ENCODE measurements at regions of chr17 and their contacts with region 1.

Region 1: DNA sequence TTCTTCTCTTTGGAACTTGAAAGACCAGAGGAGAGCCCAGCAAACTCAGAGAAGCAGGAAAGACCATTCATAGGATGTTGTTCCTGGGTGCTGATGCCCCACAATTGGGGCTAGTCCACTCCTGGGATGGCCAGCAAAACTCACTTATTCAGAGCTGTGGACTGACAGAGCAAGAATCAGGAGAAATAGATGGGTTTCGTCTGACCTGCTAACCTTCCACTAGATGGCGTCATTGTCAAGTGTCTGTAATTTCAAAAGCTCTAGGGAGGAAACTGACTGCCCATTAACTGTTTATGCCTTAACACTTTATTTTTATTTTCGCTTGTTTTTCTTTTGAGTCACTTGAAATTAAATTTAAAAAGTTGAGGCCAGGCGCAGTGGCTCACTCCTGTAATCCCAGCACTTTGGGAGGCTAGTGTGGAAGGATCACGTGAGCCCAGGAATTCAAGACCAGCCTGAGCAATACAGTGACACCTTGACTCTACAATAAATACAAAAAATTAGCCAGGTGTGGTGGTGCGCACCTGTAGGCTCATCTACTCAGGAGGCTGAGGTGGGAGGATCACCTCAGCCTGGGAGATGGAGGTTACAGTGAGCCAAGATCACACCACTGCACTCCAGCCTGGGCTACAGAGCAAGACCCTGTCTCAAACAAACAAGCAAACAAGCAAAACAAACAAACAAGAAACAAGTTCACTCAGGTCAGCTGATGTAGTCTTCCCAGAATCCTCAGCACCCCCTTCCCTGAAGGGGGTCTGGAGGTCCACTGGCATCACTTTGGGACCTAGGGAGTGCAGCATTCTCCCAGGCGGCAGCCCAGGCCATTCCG is 28.6 kb upstream of the MILR1 start:
- DNase-seq: peak; percentile 84
- ATAC-seq: peak; percentile 82
- H3K4me3 ChIP-seq: no peak overlapping the region
- H3K4me3 Mint-ChIP-seq: no peak overlapping the region
- H3K27ac ChIP-seq: no peak overlapping the region
- H3K27ac Mint-ChIP-seq: no peak overlapping the region
- H3K4me1 ChIP-seq: peaks cover 3 to 8% of the 10 kb centered on the region in 2 donors
- H3K4me1 Mint-ChIP-seq: peaks cover 5% of the 10 kb centered on the region
- H3K27me3 ChIP-seq: no peaks in the 10 kb centered on the region
- H3K27me3 Mint-ChIP-seq: no peaks in the 10 kb centered on the region
- CTCF ChIP-seq: peak; percentile 81

Region 2: GRCh38 chr17:64025732-64026294 is 394.5 kb before region 1 on chr17:
- CTCF ChIA-PET with region 1: interaction called, 13 read pairs
- POLR2A ChIA-PET with region 1: no interaction called
- intact Hi-C with region 1: loop called (anchors 5 kb)
- DNase-seq: peak; percentile 94
- ATAC-seq: peak; percentile 90
- H3K4me3 ChIP-seq: peak overlapping the region in 4 of 5 experiments; percentile 4 to 47 (median 22)
- H3K4me3 Mint-ChIP-seq: peak overlapping the region; percentile 80
- H3K27ac ChIP-seq: peak overlapping the region; percentile 52 to 67
- H3K27ac Mint-ChIP-seq: peak overlapping the region; percentile 57
- H3K4me1 ChIP-seq: peaks cover 26 to 30% of the 10 kb centered on the region in 2 donors
- H3K4me1 Mint-ChIP-seq: peaks cover 37% of the 10 kb centered on the region
- H3K27me3 ChIP-seq: no peaks in the 10 kb centered on the region
- H3K27me3 Mint-ChIP-seq: no peaks in the 10 kb centered on the region
- CTCF ChIP-seq: peak; percentile 94

Region 3: GRCh38 chr17:64320613-64321553 is 99.5 kb before region 1 on chr17:
- CTCF ChIA-PET with region 1: interaction called, 316 read pairs
- POLR2A ChIA-PET with region 1: no interaction called
- intact Hi-C with region 1: loop called (anchors 1 kb)
- DNase-seq: peak; percentile 74
- ATAC-seq: peak; percentile 13
- H3K4me3 ChIP-seq: no peak overlapping the region
- H3K4me3 Mint-ChIP-seq: peak overlapping the region; percentile 56
- H3K27ac ChIP-seq: no peak overlapping the region
- H3K27ac Mint-ChIP-seq: peak overlapping the region; percentile 5
- H3K4me1 ChIP-seq: peaks cover 26 to 42% of the 10 kb centered on the region in 2 donors
- H3K4me1 Mint-ChIP-seq: peaks cover 54% of the 10 kb centered on the region
- H3K27me3 ChIP-seq: no peaks in the 10 kb centered on the region
- H3K27me3 Mint-ChIP-seq: peaks cover 3% of the 10 kb centered on the region
- CTCF ChIP-seq: peak; percentile 95

Region 4: DNA sequence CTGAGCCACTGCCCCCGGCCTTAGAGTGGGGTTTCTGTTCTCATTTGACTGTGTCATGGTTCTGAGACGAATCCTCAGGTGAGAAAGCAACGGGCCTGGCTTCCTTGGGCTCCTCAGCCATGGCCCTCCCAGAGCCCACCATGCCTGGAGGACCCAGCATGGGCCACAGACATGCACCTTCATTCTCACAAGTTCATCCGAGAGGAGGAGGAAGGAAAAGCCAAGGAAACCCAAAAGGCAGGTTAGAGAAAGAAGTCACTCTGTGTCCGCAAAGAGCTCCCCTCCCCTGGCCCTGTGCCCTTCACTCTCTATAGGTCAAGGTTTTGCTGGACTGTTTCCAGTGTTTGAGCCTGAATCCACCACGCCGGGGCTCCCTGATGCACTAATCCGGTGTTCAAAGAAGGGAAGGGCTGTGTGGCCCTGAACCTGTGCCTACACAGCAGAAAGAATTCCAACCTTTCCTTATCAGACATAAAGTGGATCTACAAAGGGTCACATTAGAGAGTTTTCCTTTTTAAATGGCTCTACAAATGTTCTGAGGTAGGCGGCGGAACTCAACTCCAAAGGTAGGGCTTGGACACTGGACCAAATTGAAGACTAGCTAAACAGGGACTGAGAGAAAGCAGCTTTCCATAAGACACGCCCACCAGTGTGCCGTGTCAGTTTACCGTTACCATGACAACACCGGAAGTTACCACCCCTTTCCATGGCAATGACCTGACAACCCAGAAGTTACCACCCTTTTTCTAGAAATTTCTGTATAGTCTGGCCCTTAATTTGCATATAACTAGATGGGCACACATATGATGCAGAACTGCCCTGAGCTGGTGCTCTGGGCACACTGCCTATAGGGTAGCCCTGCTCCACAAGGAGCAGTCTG is 13.8 kb before region 1 on chr17:
- CTCF ChIA-PET with region 1: interaction called, 94 read pairs
- POLR2A ChIA-PET with region 1: no interaction called
- intact Hi-C with region 1: no loop called
- DNase-seq: peak; percentile 43
- ATAC-seq: no peak
- H3K4me3 ChIP-seq: no peak overlapping the region
- H3K4me3 Mint-ChIP-seq: peak overlapping the region; percentile 34
- H3K27ac ChIP-seq: no peak overlapping the region
- H3K27ac Mint-ChIP-seq: peak overlapping the region; percentile 70
- H3K4me1 ChIP-seq: peaks cover 66 to 79% of the 10 kb centered on the region in 2 donors
- H3K4me1 Mint-ChIP-seq: peaks cover 68% of the 10 kb centered on the region
- H3K27me3 ChIP-seq: no peaks in the 10 kb centered on the region
- H3K27me3 Mint-ChIP-seq: no peaks in the 10 kb centered on the region
- CTCF ChIP-seq: no peak

Region 5: GRCh38 chr17:64491034-64491859 is 70.9 kb after region 1 on chr17:
- CTCF ChIA-PET with region 1: interaction called, 199 read pairs
- POLR2A ChIA-PET with region 1: interaction called, 7 read pairs
- intact Hi-C with region 1: loop called (anchors 1 kb)
- DNase-seq: peak; percentile 61
- ATAC-seq: peak; percentile 65
- H3K4me3 ChIP-seq: no peak overlapping the region
- H3K4me3 Mint-ChIP-seq: no peak overlapping the region
- H3K27ac ChIP-seq: no peak overlapping the region
- H3K27ac Mint-ChIP-seq: no peak overlapping the region
- H3K4me1 ChIP-seq: peaks cover 20 to 21% of the 10 kb centered on the region in 2 donors
- H3K4me1 Mint-ChIP-seq: peaks cover 24% of the 10 kb centered on the region
- H3K27me3 ChIP-seq: no peaks in the 10 kb centered on the region
- H3K27me3 Mint-ChIP-seq: no peaks in the 10 kb centered on the region
- CTCF ChIP-seq: peak; percentile 68

Region 6: GRCh38 chr17:64534175-64534574 is 113.8 kb after region 1 on chr17:
- CTCF ChIA-PET with region 1: interaction called, 15 read pairs
- POLR2A ChIA-PET with region 1: no interaction called
- intact Hi-C with region 1: no loop called
- DNase-seq: no peak
- ATAC-seq: no peak
- H3K4me3 ChIP-seq: no peak overlapping the region
- H3K4me3 Mint-ChIP-seq: no peak overlapping the region
- H3K27ac ChIP-seq: no peak overlapping the region
- H3K27ac Mint-ChIP-seq: peak overlapping the region; percentile 24
- H3K4me1 ChIP-seq: no peaks in the 10 kb centered on the region
- H3K4me1 Mint-ChIP-seq: no peaks in the 10 kb centered on the region
- H3K27me3 ChIP-seq: no peaks in the 10 kb centered on the region
- H3K27me3 Mint-ChIP-seq: no peaks in the 10 kb centered on the region
- CTCF ChIP-seq: no peak